Mucosa of descending colon (tissue), 3 donors: ENCODE measurements at regions of chr13 and their contacts with region 1.

Region 1: DNA sequence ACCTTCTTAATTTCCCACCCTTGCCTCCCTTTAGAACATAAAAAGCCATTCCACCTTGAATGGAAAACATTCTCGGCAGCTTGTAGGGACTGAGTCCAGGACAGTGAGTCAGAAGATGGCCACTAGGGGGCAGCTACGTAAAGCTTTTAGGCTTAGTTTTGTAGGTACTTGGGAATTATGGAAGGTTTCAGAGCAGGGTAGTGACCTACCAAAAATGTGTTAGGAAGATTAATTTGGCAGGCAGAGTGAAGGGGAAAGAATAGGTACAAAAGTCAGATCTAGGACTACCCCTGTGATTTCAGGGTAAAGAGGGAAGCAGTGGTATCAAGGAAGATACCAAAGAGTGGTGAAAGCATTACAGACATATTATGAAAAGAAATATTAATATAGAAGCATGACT is 198.4 kb downstream of the NDFIP2 start:
- DNase-seq: peak in 2 of 3 donors; percentile 54 to 95
- ATAC-seq: peak; percentile 87
- H3K4me3 ChIP-seq: no peak overlapping the region
- H3K4me1 ChIP-seq: no peaks in the 10 kb centered on the region
- CTCF ChIP-seq: peak; percentile 51

Region 2: DNA sequence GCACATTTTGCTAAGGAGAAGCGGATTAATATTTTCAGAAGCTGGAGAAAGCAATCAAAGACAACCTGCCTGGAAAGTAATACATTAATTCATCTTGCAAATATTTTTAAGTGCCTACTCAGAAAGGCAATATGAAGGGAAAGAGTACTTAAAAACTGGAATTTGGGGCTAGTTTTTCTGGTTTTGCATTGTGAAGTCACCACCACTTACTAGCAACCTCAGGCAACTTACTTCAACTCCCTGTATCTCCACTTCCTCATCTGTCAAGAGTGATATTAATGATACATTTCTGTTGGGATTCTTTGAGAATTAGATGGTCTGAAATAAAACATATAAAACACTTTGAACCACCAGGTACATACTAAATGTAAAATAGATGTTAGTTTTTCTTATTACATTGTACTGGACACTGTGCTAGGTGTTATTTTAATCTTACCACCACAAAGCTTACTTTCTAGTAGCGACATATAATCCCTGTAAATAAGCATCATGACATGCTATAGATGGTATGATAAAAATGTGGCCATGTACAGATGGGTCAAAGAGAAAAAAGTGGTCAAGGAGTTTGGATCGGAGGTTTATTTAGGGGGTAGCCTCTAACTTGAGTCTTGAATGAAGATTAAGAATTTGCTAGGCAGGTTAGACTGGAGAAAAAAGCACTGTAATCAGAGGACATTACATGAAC is 560.4 kb after region 1 on chr13:
- intact Hi-C with region 1: loop called in 1 of 2 experiments (anchors 5 kb)
- DNase-seq: no peak
- ATAC-seq: no peak
- H3K4me3 ChIP-seq: no peak overlapping the region
- H3K4me1 ChIP-seq: peaks cover 7% of the 10 kb centered on the region
- CTCF ChIP-seq: no peak

Region 3: DNA sequence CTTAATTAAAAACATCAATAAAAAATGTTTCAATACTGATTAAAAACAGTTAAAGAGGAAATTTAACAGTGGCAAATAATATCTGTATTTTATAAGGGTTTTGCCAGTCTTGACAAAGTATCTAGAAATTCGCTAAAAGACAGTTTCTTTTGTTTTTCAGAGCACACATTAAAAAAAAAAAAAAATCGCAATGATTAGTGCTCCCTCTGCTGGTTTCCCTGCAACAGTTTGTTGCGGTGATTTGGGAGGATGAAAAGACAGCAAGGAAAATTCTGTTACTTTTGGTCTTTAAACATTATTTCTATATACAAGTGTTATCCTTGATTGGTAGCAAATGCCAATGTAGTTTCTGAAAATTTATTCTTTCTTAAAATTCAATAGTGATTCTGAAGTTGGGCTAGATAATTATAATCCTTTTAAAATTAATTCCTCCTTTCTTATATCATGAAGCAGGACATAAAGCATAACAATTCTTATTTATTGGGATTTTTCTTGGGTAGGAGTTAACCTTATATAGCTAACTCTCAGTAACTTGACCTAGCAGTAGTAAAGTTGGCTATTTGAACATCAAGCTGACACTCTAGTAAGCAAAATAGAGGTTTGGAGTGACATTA is 684.7 kb after region 1 on chr13:
- intact Hi-C with region 1: loop called in 1 of 2 experiments (anchors 2 kb)
- DNase-seq: peak in 1 of 3 donors; percentile 12
- ATAC-seq: no peak
- H3K4me3 ChIP-seq: no peak overlapping the region
- H3K4me1 ChIP-seq: peaks cover 4% of the 10 kb centered on the region
- CTCF ChIP-seq: peak; percentile 24